Dendritic cell treated with granulocyte-macrophage colony-stimulating factor and Interleukin-4, amounts not matched to agents 40 ng/mL and 50 ng/mL, for 4 days (primary cell): ENCODE measurements at regions of chr3 and their contacts with region 1.

Region 1: DNA sequence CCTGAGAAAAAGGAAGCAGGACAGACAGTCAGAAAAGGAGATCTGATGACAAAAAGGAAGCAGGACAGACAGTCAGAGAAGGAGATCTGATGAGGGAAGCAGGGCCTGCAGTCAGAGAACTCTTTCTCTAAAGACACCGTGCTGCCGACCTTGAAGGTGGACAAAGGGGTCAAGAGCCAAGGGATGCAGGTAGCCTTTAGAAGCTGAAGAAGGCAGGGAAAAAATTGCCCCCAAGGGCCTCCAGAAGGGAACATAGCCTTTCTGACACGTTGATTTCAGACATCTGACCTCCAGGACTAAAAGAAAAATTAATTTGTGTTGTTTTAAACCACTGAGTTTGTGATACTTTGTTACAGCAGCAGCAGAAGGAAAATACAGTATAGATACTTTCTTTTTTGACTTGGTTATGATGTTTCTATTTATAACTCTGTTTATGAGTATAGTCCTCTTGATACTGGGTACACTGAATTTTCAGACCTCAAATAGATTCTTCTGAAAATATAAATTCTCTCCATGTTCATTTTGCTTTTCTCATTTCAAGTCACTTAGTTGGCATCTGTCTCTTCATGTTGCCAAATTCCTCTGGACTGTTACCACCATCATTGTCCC is 44.5 kb upstream of the ST3GAL6 start:
- H3K4me3 Mint-ChIP-seq: no peak overlapping the region
- H3K27ac Mint-ChIP-seq: peak overlapping the region; percentile 47
- H3K4me1 Mint-ChIP-seq: peaks cover 11% of the 10 kb centered on the region
- H3K27me3 Mint-ChIP-seq: no peaks in the 10 kb centered on the region

Region 2: DNA sequence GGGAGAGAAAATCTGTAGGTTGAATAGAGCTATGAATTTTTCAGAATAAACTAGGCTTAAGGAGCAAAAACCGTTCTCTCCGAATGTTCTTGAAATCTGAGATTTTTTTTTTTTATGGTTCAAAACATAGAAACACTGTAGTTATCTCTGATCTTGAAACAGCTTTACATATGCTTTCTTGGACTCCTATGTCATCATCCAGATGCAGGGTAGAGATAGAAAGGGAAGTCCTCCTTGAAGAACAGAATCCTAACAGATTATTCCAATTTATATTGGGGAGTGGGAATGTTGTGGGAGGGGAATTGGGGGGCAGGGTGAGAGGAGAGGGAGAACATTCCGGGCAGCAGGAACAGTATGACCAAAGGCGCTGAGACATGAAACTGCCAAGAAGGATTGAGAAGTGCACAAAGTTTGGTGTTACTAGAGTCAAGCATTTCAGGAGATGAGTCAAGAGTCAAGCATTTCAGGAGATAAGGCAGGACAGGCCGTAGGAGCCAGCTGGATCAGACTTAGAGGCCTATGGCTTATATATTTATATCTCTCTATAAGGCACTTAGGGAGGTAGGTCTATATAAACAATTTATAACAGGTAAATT is 22.6 kb after region 1 on chr3:
- intact Hi-C with region 1: loop called (anchors 2 kb)
- H3K4me3 Mint-ChIP-seq: no peak overlapping the region
- H3K27ac Mint-ChIP-seq: no peak overlapping the region
- H3K4me1 Mint-ChIP-seq: peaks cover 36% of the 10 kb centered on the region
- H3K27me3 Mint-ChIP-seq: no peaks in the 10 kb centered on the region